Activated CD4-positive, alpha-beta T cell treated with anti-CD3 and anti-CD28 coated beads, Interleukin-2, amount 10 ng/mL, durations not matched to agents 24 days and 14 days (primary cell): ENCODE measurements at regions of chr2 and their contacts with region 1.

Region 1: GRCh38 chr2:190511104-190511503 is 23.4 kb downstream of the NEMP2 start:
- DNase-seq: no peak
- H3K4me3 Mint-ChIP-seq: no peak overlapping the region
- H3K27ac Mint-ChIP-seq: no peak overlapping the region
- H3K4me1 Mint-ChIP-seq: peaks cover 22% of the 10 kb centered on the region
- H3K27me3 Mint-ChIP-seq: no peaks in the 10 kb centered on the region

Region 2: GRCh38 chr2:190205657-190206056 is 305.4 kb before region 1 on chr2:
- intact Hi-C with region 1: no loop called
- DNase-seq: no peak
- H3K4me3 Mint-ChIP-seq: no peak overlapping the region
- H3K27ac Mint-ChIP-seq: no peak overlapping the region
- H3K4me1 Mint-ChIP-seq: no peaks in the 10 kb centered on the region
- H3K27me3 Mint-ChIP-seq: no peaks in the 10 kb centered on the region

Region 3: GRCh38 chr2:190382851-190383250 is 128.3 kb before region 1 on chr2:
- intact Hi-C with region 1: loop called (anchors 1 kb)
- DNase-seq: peak; percentile 83
- H3K4me3 Mint-ChIP-seq: no peak overlapping the region
- H3K27ac Mint-ChIP-seq: no peak overlapping the region
- H3K4me1 Mint-ChIP-seq: peaks cover 5% of the 10 kb centered on the region
- H3K27me3 Mint-ChIP-seq: peaks cover 6% of the 10 kb centered on the region

Region 4: DNA sequence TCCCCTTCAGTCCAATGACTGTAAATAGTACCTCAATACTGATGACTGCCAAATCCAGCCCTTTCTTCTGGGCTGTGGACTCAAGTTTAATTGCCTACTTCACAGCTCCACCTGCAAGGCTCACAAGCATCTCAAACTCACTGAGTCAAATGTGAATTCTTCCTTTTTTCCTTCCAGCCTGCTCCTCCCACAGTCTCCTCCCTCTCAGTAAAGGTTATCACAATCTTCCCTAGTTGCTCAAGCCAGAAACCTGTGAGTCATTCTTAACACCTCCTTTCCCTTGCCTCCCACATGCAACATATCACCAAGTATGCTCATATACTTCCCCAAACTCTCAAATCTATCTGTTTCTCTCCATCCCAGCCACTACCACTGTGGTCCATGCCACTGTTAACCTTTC is 106.6 kb before region 1 on chr2:
- intact Hi-C with region 1: no loop called
- DNase-seq: peak; percentile 60
- H3K4me3 Mint-ChIP-seq: no peak overlapping the region
- H3K27ac Mint-ChIP-seq: no peak overlapping the region
- H3K4me1 Mint-ChIP-seq: peaks cover 11% of the 10 kb centered on the region
- H3K27me3 Mint-ChIP-seq: no peaks in the 10 kb centered on the region

Region 5: GRCh38 chr2:190486037-190486623 is 25.0 kb before region 1 on chr2:
- intact Hi-C with region 1: no loop called
- DNase-seq: no peak
- H3K4me3 Mint-ChIP-seq: no peak overlapping the region
- H3K27ac Mint-ChIP-seq: no peak overlapping the region
- H3K4me1 Mint-ChIP-seq: peaks cover 12% of the 10 kb centered on the region
- H3K27me3 Mint-ChIP-seq: no peaks in the 10 kb centered on the region